IMR-90 (cell line): ENCODE measurements at regions of chr1 and their contacts with region 1.

Region 1: DNA sequence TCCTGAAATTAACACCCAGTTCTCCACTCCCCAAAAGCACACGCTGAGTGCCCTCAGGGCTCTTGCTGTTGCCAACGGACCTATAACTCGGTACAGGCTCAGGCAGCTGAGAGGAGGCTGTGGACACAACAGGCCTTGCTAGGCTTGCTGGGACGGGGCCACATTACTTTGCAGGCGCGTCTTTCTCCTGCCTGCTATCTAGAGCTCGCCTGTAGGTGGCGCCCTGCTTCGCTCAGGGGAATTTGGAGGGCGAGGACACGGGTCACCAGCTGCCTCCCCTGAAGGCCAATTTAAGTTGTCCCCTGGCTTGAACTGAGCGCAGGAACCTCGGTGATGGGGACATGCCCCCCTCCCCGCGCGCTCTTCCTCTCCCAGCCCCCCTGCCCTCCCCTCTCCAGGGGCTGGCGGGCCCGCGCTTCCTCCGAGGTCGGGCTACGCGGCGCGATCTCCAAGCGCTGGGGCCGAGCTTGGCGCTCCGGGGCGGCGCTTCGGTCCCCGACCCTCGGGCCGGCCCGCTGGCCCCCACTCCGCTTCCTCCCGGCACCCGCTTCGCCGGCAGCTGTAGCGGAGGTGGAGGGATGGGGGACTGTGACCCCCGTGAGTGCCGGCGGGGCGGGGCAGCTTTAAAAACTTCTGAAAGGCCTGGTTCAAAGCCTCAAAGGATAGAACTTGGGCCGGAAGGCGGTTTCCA is 32.4 kb upstream of the NFIA start:
- DNase-seq: peak; percentile 68
- ATAC-seq: peak; percentile 95
- H3K4me3 ChIP-seq: peak overlapping the region; percentile 61
- H3K27ac ChIP-seq: no peak overlapping the region
- H3K4me1 ChIP-seq: no peaks in the 10 kb centered on the region
- H3K27me3 ChIP-seq: peaks cover 42% of the 10 kb centered on the region
- CTCF ChIP-seq: peak; percentile 92
- POLR2A ChIP-seq: no peak
- RAD21 ChIP-seq: peak; percentile 81

Region 2: GRCh38 chr1:59971464-59971911 is 1078.5 kb before region 1 on chr1:
- CTCF ChIA-PET with region 1: interaction called, 4 read pairs
- POLR2A ChIA-PET with region 1: no interaction called
- dilution Hi-C with region 1: no loop called
- in situ Hi-C with region 1: loop called (anchors 25 kb)
- intact Hi-C with region 1: no loop called
- DNase-seq: peak; percentile 34
- ATAC-seq: peak; percentile 84
- H3K4me3 ChIP-seq: no peak overlapping the region
- H3K27ac ChIP-seq: no peak overlapping the region
- H3K4me1 ChIP-seq: peaks cover 5% of the 10 kb centered on the region
- H3K27me3 ChIP-seq: peaks cover 15% of the 10 kb centered on the region
- CTCF ChIP-seq: peak; percentile 88
- POLR2A ChIP-seq: no peak
- RAD21 ChIP-seq: peak; percentile 68

Region 3: GRCh38 chr1:60841116-60842046 is 208.6 kb before region 1 on chr1:
- CTCF ChIA-PET with region 1: no interaction called
- POLR2A ChIA-PET with region 1: no interaction called
- dilution Hi-C with region 1: no loop called
- in situ Hi-C with region 1: no loop called
- intact Hi-C with region 1: no loop called
- DNase-seq: no peak
- ATAC-seq: no peak
- H3K4me3 ChIP-seq: no peak overlapping the region
- H3K27ac ChIP-seq: no peak overlapping the region
- H3K4me1 ChIP-seq: no peaks in the 10 kb centered on the region
- H3K27me3 ChIP-seq: no peaks in the 10 kb centered on the region
- CTCF ChIP-seq: no peak
- POLR2A ChIP-seq: no peak
- RAD21 ChIP-seq: no peak

Region 4: DNA sequence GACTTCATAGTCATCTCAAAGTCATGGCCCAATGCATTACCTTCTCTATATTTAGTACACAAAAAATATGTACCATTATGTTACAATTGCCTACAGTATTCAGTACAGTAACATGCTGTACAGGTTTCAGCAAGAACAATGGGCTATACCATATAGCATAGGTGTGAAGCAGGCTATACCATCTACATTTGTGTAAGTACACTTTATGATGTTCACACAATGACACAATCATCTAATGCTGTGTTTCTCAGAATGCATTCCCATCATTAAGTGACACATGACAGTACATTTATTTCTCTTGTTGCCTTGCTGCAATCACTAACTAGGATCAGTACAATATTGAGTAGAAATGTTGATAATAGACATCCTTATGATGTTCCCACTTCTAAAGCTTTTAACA is 14.1 kb before region 1 on chr1:
- CTCF ChIA-PET with region 1: interaction called, 12 read pairs
- POLR2A ChIA-PET with region 1: no interaction called
- dilution Hi-C with region 1: no loop called
- in situ Hi-C with region 1: no loop called
- intact Hi-C with region 1: no loop called
- DNase-seq: no peak
- ATAC-seq: no peak
- H3K4me3 ChIP-seq: no peak overlapping the region
- H3K27ac ChIP-seq: no peak overlapping the region
- H3K4me1 ChIP-seq: no peaks in the 10 kb centered on the region
- H3K27me3 ChIP-seq: no peaks in the 10 kb centered on the region
- CTCF ChIP-seq: no peak
- POLR2A ChIP-seq: no peak
- RAD21 ChIP-seq: no peak

Region 5: DNA sequence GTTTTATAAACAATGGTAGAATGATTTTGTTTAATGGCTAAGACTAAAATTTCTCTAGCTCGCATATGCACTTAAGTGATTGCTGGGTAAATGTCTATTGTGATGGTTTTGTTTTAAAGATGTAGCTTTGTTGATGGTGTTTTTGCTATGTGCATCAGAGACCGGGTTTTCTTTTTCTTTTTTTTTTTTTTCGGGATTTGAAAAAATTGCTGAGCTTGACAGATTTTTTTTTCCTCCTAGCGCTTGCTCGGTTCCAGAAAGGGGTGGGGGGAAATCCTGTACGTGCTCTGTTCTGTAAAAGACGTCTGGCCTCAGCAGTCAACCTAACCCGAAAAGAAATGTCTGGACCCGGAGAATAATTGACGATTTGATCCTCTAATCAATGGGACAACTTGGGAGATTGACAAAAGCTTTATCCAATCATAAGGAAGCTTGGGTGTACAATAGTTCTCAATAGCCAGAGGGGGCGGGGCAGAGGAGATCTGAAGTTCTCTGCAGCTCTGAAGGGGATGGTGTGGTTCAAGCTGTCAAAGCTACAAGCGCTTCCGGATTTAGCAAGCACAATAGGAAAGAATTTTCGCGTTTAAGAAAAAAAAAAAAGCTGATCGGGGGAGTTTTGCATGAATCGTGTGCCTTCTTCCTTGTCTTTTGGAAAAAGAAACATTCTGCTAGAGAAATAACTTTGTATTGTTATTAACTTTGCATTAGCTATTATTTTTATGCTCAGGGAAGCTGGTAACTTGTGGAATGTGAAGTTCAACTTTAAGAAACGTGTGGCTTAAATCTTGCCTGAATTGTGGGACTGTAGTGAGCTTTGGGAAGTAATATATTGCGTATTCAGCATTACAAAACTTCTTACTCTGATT is 27.9 kb after region 1 on chr1:
- CTCF ChIA-PET with region 1: interaction called, 5 read pairs
- POLR2A ChIA-PET with region 1: interaction called, 3 read pairs
- dilution Hi-C with region 1: no loop called
- in situ Hi-C with region 1: no loop called
- intact Hi-C with region 1: loop called (anchors 2 kb)
- DNase-seq: peak; percentile 100
- ATAC-seq: peak; percentile 74
- H3K4me3 ChIP-seq: peak overlapping the region; percentile 82
- H3K27ac ChIP-seq: no peak overlapping the region
- H3K4me1 ChIP-seq: no peaks in the 10 kb centered on the region
- H3K27me3 ChIP-seq: no peaks in the 10 kb centered on the region
- CTCF ChIP-seq: no peak
- POLR2A ChIP-seq: no peak
- RAD21 ChIP-seq: no peak

Region 6: DNA sequence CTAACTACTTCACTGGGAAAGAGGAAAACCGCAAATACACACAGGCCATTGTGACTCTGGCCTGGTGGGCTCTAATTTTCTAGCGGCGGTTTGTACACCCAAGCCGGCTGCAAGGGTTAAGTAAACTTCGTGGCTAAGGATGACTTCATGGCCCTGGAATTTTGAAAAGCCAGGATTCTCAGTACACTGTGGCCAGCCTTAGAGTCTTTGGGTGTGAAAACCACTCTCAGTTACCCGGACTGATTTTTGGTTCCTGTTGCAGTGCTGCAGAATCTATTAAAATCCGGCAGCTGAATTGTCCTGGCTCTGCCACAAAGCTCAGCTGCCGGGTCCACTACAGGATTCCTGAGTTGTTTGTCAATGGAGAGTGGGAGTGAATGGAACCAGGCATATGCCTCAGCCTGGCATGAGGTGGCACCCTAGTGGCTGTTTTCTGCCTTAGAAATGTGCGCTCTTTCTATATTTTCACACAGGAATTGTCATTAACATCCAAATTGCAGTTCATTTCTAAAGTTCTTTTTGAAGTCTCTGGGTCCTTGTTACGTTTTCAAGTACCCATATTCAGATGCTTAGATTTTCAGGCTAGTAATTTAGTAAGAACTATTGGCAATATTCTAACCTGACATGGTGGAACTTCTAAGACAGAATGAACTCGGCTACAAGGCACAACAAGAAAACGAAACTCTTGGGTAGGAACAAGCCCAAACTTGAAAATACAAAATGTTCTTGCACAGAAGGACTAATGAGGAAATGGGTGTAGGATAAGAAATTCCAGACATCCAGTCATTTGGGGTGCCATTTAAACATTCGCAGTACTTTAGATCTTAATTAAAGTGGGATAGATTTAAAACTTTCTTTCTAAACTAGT is 288.2 kb after region 1 on chr1:
- CTCF ChIA-PET with region 1: interaction called, 3 read pairs
- POLR2A ChIA-PET with region 1: no interaction called
- dilution Hi-C with region 1: no loop called
- in situ Hi-C with region 1: loop called (anchors 10 kb)
- intact Hi-C with region 1: loop called (anchors 1 kb)
- DNase-seq: peak; percentile 75
- ATAC-seq: peak; percentile 94
- H3K4me3 ChIP-seq: no peak overlapping the region
- H3K27ac ChIP-seq: peak overlapping the region; percentile 6; the same call in 1 of the 2 replicates
- H3K4me1 ChIP-seq: no peaks in the 10 kb centered on the region
- H3K27me3 ChIP-seq: peaks cover 29% of the 10 kb centered on the region
- CTCF ChIP-seq: peak; percentile 60
- POLR2A ChIP-seq: no peak
- RAD21 ChIP-seq: peak; percentile 66

Region 7: GRCh38 chr1:61588736-61589672 is 539.0 kb after region 1 on chr1:
- CTCF ChIA-PET with region 1: no interaction called
- POLR2A ChIA-PET with region 1: no interaction called
- dilution Hi-C with region 1: no loop called
- in situ Hi-C with region 1: no loop called
- intact Hi-C with region 1: loop called (anchors 1 kb)
- DNase-seq: peak; percentile 36
- ATAC-seq: peak; percentile 85
- H3K4me3 ChIP-seq: no peak overlapping the region
- H3K27ac ChIP-seq: no peak overlapping the region
- H3K4me1 ChIP-seq: no peaks in the 10 kb centered on the region
- H3K27me3 ChIP-seq: no peaks in the 10 kb centered on the region; the same call in 1 of the 2 replicates
- CTCF ChIP-seq: peak; percentile 63
- POLR2A ChIP-seq: no peak
- RAD21 ChIP-seq: peak; percentile 63